Caco-2 (cell line): ENCODE measurements at regions of chr7 and their contacts with region 1.

Region 1: GRCh38 chr7:134098072-134098471 is 29.1 kb upstream of the LRGUK start:
- DNase-seq: no peak
- H3K4me3 ChIP-seq: no peak overlapping the region
- H3K4me3 Mint-ChIP-seq: no peak overlapping the region
- H3K27ac Mint-ChIP-seq: no peak overlapping the region
- H3K4me1 ChIP-seq: no peaks in the 10 kb centered on the region
- H3K4me1 Mint-ChIP-seq: no peaks in the 10 kb centered on the region
- H3K27me3 ChIP-seq: no peaks in the 10 kb centered on the region
- H3K27me3 Mint-ChIP-seq: no peaks in the 10 kb centered on the region
- CTCF ChIP-seq: no peak

Region 2: GRCh38 chr7:134084488-134085144 is 13.5 kb before region 1 on chr7:
- CTCF ChIA-PET with region 1: no interaction called
- POLR2A ChIA-PET with region 1: no interaction called
- intact Hi-C with region 1: no loop called
- DNase-seq: no peak
- H3K4me3 ChIP-seq: no peak overlapping the region
- H3K4me3 Mint-ChIP-seq: no peak overlapping the region
- H3K27ac Mint-ChIP-seq: no peak overlapping the region
- H3K4me1 ChIP-seq: no peaks in the 10 kb centered on the region
- H3K4me1 Mint-ChIP-seq: peaks cover 7% of the 10 kb centered on the region
- H3K27me3 ChIP-seq: no peaks in the 10 kb centered on the region
- H3K27me3 Mint-ChIP-seq: no peaks in the 10 kb centered on the region
- CTCF ChIP-seq: no peak

Region 3: DNA sequence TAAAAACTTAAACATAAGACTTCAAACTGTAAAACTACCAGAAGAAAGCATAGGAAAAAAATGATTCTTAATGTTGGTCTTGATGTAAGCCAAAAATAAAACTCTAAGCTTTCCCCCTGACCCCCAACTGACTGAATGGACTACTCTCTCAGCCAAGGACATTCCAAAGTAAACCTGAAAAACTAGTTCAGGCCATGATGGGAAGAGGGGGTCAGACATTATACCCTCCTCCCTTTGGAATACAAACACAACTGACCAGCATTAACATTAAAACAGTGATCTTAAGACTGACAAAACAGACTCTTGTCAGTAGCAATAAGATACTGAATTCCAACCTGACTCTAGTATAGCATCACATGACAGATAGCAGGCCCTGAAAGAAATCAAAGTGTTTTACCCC is 15.6 kb after region 1 on chr7:
- CTCF ChIA-PET with region 1: no interaction called
- POLR2A ChIA-PET with region 1: no interaction called
- intact Hi-C with region 1: loop called (anchors 2 kb)
- DNase-seq: no peak
- H3K4me3 ChIP-seq: no peak overlapping the region
- H3K4me3 Mint-ChIP-seq: no peak overlapping the region
- H3K27ac Mint-ChIP-seq: no peak overlapping the region
- H3K4me1 ChIP-seq: no peaks in the 10 kb centered on the region
- H3K4me1 Mint-ChIP-seq: no peaks in the 10 kb centered on the region
- H3K27me3 ChIP-seq: no peaks in the 10 kb centered on the region
- H3K27me3 Mint-ChIP-seq: peaks cover 3% of the 10 kb centered on the region
- CTCF ChIP-seq: no peak